H1 (cell line): ENCODE measurements at regions of chr1 and their contacts with region 1.

Region 1: DNA sequence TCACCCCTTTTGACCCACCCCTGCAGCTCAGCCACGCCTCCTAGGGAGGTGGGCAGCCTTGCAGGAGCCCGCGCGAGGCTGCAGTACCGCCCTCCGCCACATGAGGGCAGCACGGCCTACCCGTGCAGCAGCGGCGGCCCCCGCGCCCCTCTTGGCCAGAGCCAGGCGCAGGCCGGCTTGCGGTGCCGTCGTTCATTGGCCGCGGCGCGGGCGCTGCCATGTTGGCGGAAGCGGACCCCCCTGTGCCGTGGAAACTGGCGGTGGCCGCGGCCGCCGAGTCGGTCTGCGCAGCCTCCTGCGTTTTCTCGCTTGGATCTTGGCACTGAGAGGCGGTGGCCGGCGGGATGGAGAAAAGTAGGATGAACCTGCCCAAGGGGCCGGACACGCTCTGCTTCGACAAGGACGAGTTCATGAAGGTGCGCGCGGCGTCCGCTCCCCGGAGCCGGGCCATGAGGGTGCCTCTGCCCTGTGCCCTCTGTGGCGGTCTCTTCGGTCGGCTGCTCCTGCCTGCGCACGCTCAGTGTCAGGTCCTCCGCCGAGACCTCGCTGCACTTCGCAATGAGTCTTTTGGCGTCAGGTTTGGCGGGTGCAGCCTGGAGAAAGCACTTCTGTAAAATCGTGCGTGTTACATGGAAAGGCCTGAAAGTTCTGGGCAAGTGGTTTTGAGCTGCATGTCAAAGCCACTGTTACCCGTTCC is at the start of gene COG2:
- DNase-seq: peak; percentile 90 to 100
- H3K4me3 ChIP-seq: peak within 1 kb of the TSS; percentile 70 to 98 (median 90)
- H3K27ac ChIP-seq: peak within 1 kb of the TSS; percentile 70
- H3K4me1 ChIP-seq: peaks cover 0 to 6% (median 0%) of the 10 kb centered on the region in 4 experiments; a peak in 1 of 7 replicates
- H3K27me3 ChIP-seq: no peaks in the 10 kb centered on the region
- CTCF ChIP-seq: peak; percentile 90 to 99 (median 96)
- EP300 ChIP-seq: peak in 1 of 2 experiments; percentile 63; a peak in 1 of 3 replicates
- POLR2A ChIP-seq: peak; percentile 76 to 91
- RAD21 ChIP-seq: peak; percentile 51 to 58
- total RNA-seq, gene COG2: 33.3 and 36.7 TPM in 2 replicates

Region 2: DNA sequence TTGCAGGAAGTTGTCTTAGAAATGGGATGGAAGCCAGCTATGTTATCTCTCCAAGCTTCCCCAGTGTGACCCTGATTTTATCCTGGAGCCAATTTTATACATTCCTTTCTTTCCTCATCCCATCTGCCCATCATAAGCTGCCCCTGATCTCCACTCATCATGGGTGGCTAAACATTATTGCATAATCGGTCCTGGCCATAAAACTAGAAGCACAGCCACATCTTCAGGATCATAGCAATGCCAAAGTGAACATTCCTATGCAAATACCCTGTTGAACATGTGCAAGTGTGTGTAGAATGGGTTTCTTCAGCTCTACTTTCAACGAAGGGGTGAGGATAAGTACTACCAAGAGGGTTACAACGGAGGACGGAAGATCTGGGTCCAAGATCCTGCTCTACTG is 50.7 kb before region 1 on chr1:
- CTCF ChIA-PET with region 1: interaction called, 10 read pairs
- POLR2A ChIA-PET with region 1: no interaction called
- DNase-seq: no peak
- H3K4me3 ChIP-seq: no peak overlapping the region
- H3K27ac ChIP-seq: no peak overlapping the region
- H3K4me1 ChIP-seq: no peaks in the 10 kb centered on the region
- H3K27me3 ChIP-seq: no peaks in the 10 kb centered on the region
- CTCF ChIP-seq: no peak
- EP300 ChIP-seq: no peak
- POLR2A ChIP-seq: no peak
- RAD21 ChIP-seq: no peak

Region 3: DNA sequence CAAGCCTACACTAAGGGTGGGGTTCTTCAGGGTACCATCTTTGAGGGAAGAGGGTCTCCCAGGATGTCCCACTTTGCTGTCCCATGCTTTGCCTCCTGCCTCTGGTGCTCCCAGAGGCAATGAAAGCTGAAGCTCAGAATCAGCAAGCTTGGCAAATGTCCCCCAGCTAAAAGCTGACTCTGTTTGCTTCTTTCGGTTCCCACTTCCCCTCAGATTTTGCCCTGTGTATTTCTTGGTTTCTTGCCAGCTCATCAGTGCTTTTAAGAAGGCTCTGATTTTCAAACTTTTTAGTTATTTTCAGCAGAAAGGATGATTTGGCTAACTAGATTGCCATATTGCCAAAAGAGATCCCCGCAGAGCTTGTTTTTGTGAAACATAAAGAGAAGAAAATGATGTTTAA is 33.2 kb before region 1 on chr1:
- CTCF ChIA-PET with region 1: interaction called, 11 read pairs
- POLR2A ChIA-PET with region 1: no interaction called
- DNase-seq: no peak
- H3K4me3 ChIP-seq: peak overlapping the region in 1 of 4 experiments; percentile 37; a peak in 1 of 8 replicates
- H3K27ac ChIP-seq: no peak overlapping the region
- H3K4me1 ChIP-seq: peaks cover 0 to 18% (median 10%) of the 10 kb centered on the region in 4 experiments; a peak in 4 of 7 replicates
- H3K27me3 ChIP-seq: no peaks in the 10 kb centered on the region
- CTCF ChIP-seq: no peak
- EP300 ChIP-seq: no peak
- POLR2A ChIP-seq: no peak
- RAD21 ChIP-seq: no peak

Region 4: DNA sequence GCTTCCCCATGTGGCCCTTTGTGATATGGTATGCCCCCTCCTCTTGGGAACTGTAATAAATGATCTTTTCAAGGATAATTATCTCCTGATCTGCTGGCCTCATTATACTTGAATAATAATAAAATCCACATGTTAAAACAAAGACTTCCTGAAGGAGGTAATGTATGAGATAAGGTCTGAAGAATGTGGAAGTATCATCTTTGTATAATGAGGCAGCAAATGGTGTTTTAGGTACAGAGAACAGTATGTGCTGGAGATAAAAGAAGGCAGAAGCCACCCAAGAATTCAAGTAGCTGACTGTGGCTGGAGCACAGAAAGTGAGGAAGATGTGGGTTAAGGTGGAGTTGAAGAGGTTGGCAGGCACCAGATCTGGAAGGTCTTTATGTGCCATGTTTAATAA is 12.9 kb before region 1 on chr1:
- CTCF ChIA-PET with region 1: interaction called, 11 read pairs
- POLR2A ChIA-PET with region 1: interaction called, 4 read pairs
- DNase-seq: no peak
- H3K4me3 ChIP-seq: no peak overlapping the region
- H3K27ac ChIP-seq: no peak overlapping the region
- H3K4me1 ChIP-seq: 0 out of 7 replicates have a peak, but pooled peaks cover 0 to 2% (median 0%) of the 10 kb centered on the region in 4 experiments
- H3K27me3 ChIP-seq: no peaks in the 10 kb centered on the region
- CTCF ChIP-seq: no peak
- EP300 ChIP-seq: no peak
- POLR2A ChIP-seq: no peak
- RAD21 ChIP-seq: no peak

Region 5: DNA sequence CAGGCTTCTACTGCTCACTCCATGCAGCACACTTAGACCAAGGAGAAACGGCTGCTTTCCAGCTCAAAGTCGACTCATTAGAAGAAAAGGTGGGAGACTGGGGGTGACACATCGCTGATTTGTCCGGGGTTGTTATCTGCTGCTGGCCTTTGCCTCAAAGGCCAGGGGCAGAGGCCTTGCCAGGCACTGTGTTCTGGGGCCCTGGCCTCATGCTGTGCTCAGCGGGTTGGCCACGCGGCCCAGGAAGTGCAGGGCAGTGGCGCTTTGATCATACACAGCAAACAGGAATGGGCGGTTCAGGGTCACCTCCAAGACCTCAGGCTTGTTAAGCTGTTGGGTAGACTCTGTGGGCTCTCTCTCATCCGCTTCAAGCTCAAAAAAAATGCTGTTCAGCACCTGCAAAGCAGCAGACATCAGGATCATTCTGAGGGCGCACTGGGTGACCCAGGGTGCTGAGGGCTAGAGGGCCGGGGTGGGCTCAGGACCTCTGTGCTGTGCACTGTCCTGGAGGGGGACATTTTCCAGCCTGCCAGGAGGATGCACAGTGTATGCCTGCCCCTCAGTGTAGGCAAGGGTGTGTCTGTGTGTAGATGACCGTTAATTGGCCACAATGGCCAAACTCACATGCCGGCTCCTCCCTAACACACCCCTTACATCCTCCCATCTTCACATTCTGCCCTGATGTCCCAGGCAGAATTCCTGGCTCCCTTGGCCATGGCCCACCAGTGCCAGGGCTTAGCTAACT is 60.7 kb after region 1 on chr1:
- CTCF ChIA-PET with region 1: interaction called, 12 read pairs
- POLR2A ChIA-PET with region 1: no interaction called
- DNase-seq: no peak
- H3K4me3 ChIP-seq: no peak overlapping the region
- H3K27ac ChIP-seq: no peak overlapping the region
- H3K4me1 ChIP-seq: peaks cover 0 to 4% (median 0%) of the 10 kb centered on the region in 4 experiments; a peak in 2 of 7 replicates
- H3K27me3 ChIP-seq: no peaks in the 10 kb centered on the region
- CTCF ChIP-seq: no peak
- EP300 ChIP-seq: no peak
- POLR2A ChIP-seq: no peak
- RAD21 ChIP-seq: no peak